ENCODE measurements at regions of chr17 and their contacts with region 1.

Region 1: DNA sequence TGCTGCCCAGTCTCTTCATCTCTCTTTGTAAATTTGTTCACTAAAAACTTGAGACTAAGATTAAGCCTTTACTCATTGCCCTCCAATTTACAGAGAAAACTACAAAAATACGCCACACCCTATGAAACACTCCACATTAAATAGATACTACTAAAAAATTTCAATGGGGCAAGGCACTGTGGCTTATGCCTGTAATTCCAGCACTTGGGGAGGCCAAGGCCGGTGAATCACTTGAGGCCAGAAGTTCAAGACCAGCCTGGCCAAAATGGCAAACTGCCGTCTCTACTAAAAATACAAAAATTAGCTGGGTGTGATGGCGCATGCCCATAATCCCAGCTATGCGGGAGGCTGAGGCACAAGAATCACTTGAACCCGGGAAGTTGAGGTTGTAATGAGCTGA is 3.8 kb downstream of the UBE2O start:
- DNase-seq: no peak
- H3K4me3 Mint-ChIP-seq: no peak overlapping the region
- H3K27ac Mint-ChIP-seq: no peak overlapping the region
- H3K4me1 Mint-ChIP-seq: peaks cover 78% of the 10 kb centered on the region
- H3K27me3 Mint-ChIP-seq: no peaks in the 10 kb centered on the region

Region 2: GRCh38 chr17:76427501-76428231 is 21.5 kb before region 1 on chr17:
- CTCF ChIA-PET with region 1: no interaction called
- POLR2A ChIA-PET with region 1: no interaction called
- DNase-seq: no peak
- H3K4me3 Mint-ChIP-seq: no peak overlapping the region
- H3K27ac Mint-ChIP-seq: no peak overlapping the region
- H3K4me1 Mint-ChIP-seq: no peaks in the 10 kb centered on the region
- H3K27me3 Mint-ChIP-seq: no peaks in the 10 kb centered on the region

Region 3: DNA sequence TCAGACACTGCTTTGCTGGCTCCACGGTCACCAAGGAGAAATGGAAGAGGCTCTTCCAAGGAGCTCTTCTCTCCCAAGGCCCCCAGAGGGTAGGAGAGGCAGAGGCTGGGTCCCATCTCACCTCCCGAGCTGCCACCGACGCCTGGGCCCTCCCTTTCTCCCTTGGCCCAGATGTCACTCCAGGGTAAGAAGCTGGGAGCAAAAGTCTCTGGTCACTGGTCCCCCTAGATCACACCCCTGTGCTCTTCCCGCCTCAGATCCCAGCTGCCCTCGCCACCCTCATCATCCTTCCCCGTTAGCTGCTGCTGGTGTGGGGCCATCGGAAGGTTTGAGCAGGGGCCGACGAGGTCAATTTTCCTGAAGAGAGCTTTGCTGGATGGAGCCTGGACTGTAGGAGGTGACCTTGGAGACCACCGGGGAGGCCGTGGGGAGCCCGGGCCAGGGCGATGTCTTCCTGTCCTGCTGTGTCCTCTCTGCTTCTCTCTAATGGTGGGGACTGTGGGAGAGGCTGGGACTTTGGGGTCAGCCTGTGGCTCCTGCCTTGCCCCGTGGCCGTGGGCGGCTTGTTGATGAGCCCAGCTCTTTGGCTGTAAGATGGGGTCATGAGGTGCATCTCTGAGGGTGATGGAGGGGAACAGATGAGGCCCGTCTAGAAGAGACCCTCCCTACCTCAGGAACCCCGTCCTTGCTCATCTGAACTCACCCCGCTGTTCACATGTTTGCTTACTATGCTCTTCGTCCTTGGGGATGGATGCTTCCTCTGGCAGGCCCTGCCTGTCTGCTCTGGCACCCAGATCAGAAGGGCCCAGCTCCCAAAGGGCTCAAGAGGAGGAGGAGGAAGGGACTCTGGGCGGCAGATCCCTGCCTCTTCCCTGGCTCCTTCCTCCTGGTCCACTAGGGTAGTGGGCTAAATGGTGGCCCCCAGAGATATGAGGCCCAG is 63.5 kb after region 1 on chr17:
- CTCF ChIA-PET with region 1: interaction called, 12 read pairs
- POLR2A ChIA-PET with region 1: no interaction called
- DNase-seq: no peak
- H3K4me3 Mint-ChIP-seq: no peak overlapping the region
- H3K27ac Mint-ChIP-seq: peak overlapping the region; percentile 96
- H3K4me1 Mint-ChIP-seq: peaks cover 63% of the 10 kb centered on the region
- H3K27me3 Mint-ChIP-seq: peaks cover 6% of the 10 kb centered on the region